ENCODE measurements at regions of chr7 and their contacts with region 1.

Region 1: DNA sequence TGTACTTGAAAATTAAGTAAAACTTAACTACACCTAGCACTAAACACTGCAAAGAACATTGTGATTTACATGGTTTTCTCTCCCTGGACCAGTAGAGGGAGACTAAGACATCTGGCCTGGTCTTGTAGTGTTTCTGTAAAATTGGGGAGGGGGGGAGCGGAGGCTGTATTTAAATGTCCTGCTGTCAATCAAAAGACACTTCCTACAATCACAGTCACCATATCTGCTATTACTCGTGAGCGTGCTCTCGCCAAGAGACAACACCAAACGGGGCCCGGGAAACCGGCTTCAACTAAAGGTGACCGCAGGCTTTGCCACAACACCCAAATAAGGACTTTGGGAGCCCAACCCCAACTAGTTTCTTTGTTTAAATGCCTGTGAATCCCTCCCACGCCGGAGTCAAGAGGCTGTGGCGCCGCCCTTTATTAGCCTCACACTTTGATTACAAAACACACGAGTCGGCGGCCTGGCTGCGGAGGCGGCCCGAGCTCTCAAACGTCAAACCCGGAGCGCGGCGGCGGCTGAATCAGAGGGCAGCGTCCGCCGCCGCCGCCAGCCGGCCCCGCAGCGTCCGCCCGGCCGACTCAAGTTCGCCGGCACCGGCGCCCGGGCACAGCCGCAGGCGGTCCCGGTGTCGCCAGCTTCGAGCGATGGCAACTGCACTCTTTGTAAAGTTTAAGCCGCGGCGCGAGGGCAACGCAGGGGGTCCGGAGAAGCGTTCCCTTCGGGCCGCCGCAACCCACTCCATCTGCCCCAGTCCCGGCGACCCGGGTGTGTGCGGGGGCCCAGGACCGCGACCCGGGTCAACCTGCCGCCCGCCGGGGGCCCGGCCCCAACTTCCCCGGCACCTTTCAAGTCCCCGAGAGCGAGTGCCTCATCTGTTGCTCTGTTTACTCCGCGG is 1.3 kb downstream of the KDM7A start:
- DNase-seq: peak; percentile 97
- H3K4me3 Mint-ChIP-seq: peak overlapping the region; percentile 81
- H3K27ac Mint-ChIP-seq: peak overlapping the region; percentile 89
- H3K4me1 Mint-ChIP-seq: peaks cover 44% of the 10 kb centered on the region
- H3K27me3 Mint-ChIP-seq: no peaks in the 10 kb centered on the region

Region 2: DNA sequence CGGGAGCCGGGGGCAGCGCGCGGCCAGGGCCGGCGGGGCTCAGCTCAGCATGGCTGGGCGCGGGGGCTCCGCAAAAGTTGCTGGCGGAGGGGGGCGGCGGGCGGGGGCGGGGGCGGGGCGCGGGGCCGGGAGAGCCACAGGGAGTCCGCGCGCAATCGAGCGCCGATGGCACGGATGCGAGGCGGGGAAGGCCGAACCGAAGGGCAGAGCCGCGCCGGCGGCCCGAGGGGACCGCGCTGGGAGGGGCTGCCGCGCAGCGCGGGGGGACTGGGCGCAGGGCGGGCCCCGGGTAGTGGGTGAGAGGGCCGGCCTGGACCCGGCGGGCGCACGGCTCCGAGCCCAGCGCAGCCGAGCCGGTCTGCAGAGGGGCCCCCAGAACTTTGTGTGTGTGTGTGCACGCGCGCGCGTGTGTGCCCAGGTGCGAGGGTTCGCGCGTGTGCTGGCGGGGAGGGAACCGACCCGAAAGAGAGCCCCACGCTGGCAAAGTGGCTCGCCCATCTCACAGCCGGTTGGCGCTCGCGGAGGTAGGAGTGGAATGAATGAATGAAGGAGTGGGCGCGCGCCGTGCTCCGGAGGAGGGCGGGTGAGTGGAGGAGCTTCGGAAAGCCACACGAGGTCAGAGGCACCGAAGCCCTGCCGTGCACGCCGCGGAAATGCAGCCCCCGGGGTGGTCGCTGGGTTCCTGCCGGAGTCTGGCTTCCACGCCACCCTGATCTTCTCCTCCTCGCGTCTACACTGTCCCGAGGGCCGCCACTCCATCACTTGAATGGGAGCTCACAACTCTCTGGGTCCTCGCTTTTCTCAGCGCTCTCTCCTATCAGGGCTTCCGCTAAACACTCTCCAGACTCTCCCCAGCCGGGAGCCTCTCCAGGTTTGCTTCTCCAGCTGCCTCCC is 397.3 kb before region 1 on chr7 and contains the start of gene HIPK2:
- CTCF ChIA-PET with region 1: no interaction called
- intact Hi-C with region 1: loop called (anchors 5 kb)
- DNase-seq: peak; percentile 68
- H3K4me3 Mint-ChIP-seq: peak within 1 kb of the TSS; percentile 96
- H3K27ac Mint-ChIP-seq: peak within 1 kb of the TSS; percentile 84
- H3K4me1 Mint-ChIP-seq: peaks cover 36% of the 10 kb centered on the region
- H3K27me3 Mint-ChIP-seq: peaks cover 14% of the 10 kb centered on the region
- total RNA-seq, gene HIPK2: 16.8 to 17.3 TPM

Region 3: GRCh38 chr7:140209866-140210609 is 34.6 kb after region 1 on chr7:
- CTCF ChIA-PET with region 1: interaction called, 5 read pairs
- intact Hi-C with region 1: loop called (anchors 1 kb)
- DNase-seq: peak; percentile 87
- H3K4me3 Mint-ChIP-seq: peak overlapping the region; percentile 51
- H3K27ac Mint-ChIP-seq: peak overlapping the region; percentile 90
- H3K4me1 Mint-ChIP-seq: peaks cover 86% of the 10 kb centered on the region
- H3K27me3 Mint-ChIP-seq: no peaks in the 10 kb centered on the region

Region 4: GRCh38 chr7:140298213-140298612 is 122.7 kb after region 1 on chr7:
- CTCF ChIA-PET with region 1: interaction called, 3 read pairs
- intact Hi-C with region 1: loop called (anchors 1 kb)
- DNase-seq: no peak
- H3K4me3 Mint-ChIP-seq: no peak overlapping the region
- H3K27ac Mint-ChIP-seq: no peak overlapping the region
- H3K4me1 Mint-ChIP-seq: no peaks in the 10 kb centered on the region
- H3K27me3 Mint-ChIP-seq: no peaks in the 10 kb centered on the region

Region 5: DNA sequence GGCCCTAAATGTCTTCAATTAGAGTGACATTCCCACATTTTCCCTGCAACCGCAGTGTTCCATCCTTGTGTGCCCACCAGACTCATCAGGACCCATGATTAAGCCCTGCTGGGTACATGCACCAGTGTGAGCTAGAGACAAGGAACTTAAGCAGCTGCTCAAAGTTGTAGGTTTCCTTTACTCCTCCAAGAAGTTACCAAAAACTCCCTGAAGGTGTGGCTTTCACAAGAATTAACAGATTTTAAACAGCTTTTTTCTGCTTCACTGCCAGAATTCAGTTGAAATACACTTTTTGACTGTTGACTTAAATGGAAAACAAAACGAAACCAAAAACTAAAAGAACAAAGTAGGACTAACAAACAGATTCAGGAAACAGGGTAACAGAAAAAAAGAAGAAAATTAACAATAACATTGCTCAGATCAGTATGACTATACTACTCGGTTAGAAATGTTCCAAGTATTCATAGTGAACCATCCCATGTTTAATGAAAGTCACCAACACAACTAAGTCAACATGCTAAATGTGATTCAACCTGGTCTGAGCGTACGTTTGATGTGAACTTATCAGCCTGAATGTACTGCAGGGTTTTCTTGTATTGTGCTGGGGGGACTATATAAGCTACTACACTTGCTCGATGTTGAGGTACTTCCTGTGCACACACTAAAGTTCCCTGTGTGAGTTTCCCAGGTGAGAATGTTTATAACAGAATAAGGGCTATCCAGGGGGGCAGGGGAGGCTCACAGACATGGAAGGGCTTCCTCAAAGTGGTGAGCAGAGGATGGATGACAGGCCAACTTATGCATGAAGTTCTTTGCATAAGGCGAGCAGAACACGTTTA is 200.6 kb after region 1 on chr7:
- CTCF ChIA-PET with region 1: no interaction called
- intact Hi-C with region 1: loop called (anchors 1 kb)
- DNase-seq: peak; percentile 59
- H3K4me3 Mint-ChIP-seq: peak overlapping the region; percentile 58
- H3K27ac Mint-ChIP-seq: peak overlapping the region; percentile 96
- H3K4me1 Mint-ChIP-seq: peaks cover 37% of the 10 kb centered on the region
- H3K27me3 Mint-ChIP-seq: no peaks in the 10 kb centered on the region

Region 6: DNA sequence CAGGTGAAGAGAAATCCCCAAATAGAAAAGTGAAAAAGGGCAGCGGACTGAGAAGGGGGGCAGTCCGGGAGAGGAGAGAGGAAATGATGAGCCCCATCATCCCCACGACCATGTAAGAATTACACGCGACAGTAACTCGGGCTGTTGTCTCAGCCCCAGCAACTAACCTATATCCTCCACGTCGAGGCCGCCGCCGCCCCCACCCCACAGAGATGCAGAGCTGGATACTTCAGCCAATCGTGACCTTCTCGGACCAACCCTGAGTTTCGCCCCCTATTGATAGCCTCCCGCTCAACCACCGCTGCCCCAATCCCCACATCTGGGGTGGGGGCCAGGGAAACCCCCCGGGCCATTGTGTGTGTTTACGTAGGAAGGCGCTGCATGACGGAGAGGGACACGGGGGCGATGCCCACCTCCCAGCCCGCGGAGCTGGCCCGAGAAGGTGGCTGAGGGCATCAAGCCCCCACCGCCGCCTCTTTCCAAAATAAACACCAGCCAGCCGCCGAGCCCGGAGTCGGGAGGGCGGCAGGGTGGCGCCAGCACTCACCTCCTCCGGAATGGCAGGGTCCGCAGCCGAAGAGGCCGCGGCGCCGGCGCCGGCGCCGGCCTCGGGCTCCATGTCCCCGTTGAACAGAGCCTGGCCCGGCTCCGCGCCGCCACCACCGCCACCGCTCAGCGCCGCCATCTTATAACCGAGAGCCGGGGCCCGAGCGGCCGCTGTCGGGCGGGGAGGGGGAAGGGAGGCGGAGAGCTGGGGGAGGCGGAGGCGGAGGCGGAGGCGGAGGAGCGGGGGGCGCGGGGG is 748.7 kb after region 1 on chr7:
- CTCF ChIA-PET with region 1: no interaction called
- intact Hi-C with region 1: loop called (anchors 10 kb)
- DNase-seq: peak; percentile 77
- H3K4me3 Mint-ChIP-seq: no peak overlapping the region
- H3K27ac Mint-ChIP-seq: no peak overlapping the region
- H3K4me1 Mint-ChIP-seq: peaks cover 10% of the 10 kb centered on the region
- H3K27me3 Mint-ChIP-seq: no peaks in the 10 kb centered on the region

Measured in activated naive CD4-positive, alpha-beta T cell treated with anti-CD3 and anti-CD28 coated beads for 36 hours (primary cell).